ENCODE measurements at regions of chr9 and their contacts with region 1.

Region 1: GRCh38 chr9:91727316-91727861 is 222.6 kb downstream of the ROR2 start:
- DNase-seq: peak; percentile 41
- ATAC-seq: peak; percentile 94
- H3K4me3 ChIP-seq: no peak overlapping the region
- H3K27ac ChIP-seq: no peak overlapping the region
- H3K4me1 ChIP-seq: 0 out of 2 replicates have a peak, but pooled peaks cover 8% of the 10 kb centered on the region
- H3K27me3 ChIP-seq: peaks cover 4 to 30% of the 10 kb centered on the region in 2 experiments; a peak in 4 of 5 replicates
- CTCF ChIP-seq: peak; percentile 70
- EP300 ChIP-seq: no peak
- POLR2A ChIP-seq: no peak
- RAD21 ChIP-seq: peak; percentile 36; the same call in 1 of the 2 replicates

Region 2: DNA sequence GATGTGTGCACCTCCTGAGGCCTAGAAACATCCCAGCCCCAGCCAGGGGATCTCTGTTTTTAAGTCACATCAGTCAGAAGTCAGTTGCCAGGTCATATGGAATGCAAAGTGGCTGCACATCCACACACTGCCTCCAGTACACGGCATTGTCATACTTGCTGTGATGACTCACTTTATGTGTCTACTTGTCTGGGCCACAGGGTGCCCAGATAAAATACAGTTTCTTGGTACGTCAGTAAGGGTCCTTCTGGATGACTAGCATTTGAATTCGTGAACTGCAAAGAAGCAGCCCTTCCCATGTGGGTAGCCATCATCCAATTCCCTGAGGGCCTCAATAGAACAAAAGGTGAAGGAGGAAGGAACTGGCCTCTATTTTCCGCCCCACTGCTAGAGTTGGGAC is 393.3 kb before region 1 on chr9:
- CTCF ChIA-PET with region 1: no interaction called
- POLR2A ChIA-PET with region 1: no interaction called
- in situ Hi-C with region 1: no loop called
- intact Hi-C with region 1: no loop called
- DNase-seq: no peak
- ATAC-seq: no peak
- H3K4me3 ChIP-seq: no peak overlapping the region
- H3K27ac ChIP-seq: no peak overlapping the region
- H3K4me1 ChIP-seq: no peaks in the 10 kb centered on the region
- H3K27me3 ChIP-seq: no peaks in the 10 kb centered on the region
- CTCF ChIP-seq: no peak
- EP300 ChIP-seq: no peak
- POLR2A ChIP-seq: no peak
- RAD21 ChIP-seq: no peak

Region 3: DNA sequence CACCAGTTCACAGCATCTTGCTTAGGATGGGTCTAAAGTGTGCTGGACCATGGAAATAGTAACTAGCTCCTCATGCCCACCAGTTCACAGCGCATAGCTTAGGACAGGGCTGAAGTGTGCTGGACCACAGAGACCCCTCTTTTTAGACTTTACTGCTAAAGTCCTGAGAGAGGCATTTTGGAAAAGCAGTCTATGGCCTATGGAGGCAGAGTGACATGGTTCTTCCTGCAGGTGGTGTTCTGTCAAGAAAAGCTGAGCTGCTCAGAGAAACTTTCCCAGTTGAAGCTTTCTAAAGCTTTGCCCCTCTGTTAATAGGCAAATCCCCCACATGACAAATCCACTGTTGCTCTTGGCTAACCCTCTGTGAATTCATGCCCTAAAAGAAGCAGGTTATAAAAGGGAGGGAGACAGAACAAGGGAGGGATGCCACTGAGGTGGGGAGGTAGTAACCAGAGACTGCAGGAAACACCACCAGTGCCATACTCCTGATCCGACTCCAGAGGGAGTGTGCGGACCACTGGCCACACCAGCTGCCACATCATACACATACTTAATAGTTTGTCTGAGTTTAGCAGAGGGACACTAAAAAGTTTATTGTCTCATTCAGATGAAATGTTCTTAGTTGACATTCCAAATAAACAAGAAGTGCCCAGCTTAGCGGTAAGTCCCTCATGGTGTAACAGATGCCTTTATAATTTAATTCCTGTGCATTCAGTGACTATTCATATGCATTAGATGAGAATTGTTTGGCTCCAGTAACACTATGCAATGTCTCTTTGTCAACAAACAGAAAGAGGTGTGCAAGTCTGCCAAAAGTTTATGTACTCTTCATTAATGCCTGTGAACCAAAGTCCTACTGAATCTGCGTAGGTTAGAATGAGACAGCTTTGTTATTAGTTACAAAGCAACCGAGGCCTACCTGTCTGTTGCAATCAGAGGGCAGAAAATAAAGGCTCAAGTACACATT is 67.6 kb before region 1 on chr9:
- CTCF ChIA-PET with region 1: no interaction called
- POLR2A ChIA-PET with region 1: no interaction called
- in situ Hi-C with region 1: no loop called
- intact Hi-C with region 1: loop called (anchors 1 kb)
- DNase-seq: no peak
- ATAC-seq: peak; percentile 93
- H3K4me3 ChIP-seq: no peak overlapping the region
- H3K27ac ChIP-seq: no peak overlapping the region
- H3K4me1 ChIP-seq: no peaks in the 10 kb centered on the region
- H3K27me3 ChIP-seq: peaks cover 1 to 12% of the 10 kb centered on the region in 2 experiments; a peak in 2 of 5 replicates
- CTCF ChIP-seq: peak; percentile 56
- EP300 ChIP-seq: no peak
- POLR2A ChIP-seq: no peak
- RAD21 ChIP-seq: 0 out of 2 replicates have a peak, but pooled peaks have one; percentile 15

Region 4: GRCh38 chr9:91790917-91791316 is 63.5 kb after region 1 on chr9:
- CTCF ChIA-PET with region 1: no interaction called
- POLR2A ChIA-PET with region 1: no interaction called
- in situ Hi-C with region 1: no loop called
- intact Hi-C with region 1: no loop called
- DNase-seq: no peak
- ATAC-seq: no peak
- H3K4me3 ChIP-seq: no peak overlapping the region
- H3K27ac ChIP-seq: no peak overlapping the region
- H3K4me1 ChIP-seq: no peaks in the 10 kb centered on the region
- H3K27me3 ChIP-seq: no peaks in the 10 kb centered on the region
- CTCF ChIP-seq: no peak
- EP300 ChIP-seq: no peak
- POLR2A ChIP-seq: no peak
- RAD21 ChIP-seq: no peak